CD4-positive, alpha-beta T cell (primary cell): ENCODE measurements at regions of chr11 and their contacts with region 1.

Region 1: GRCh38 chr11:65497141-65498041 is 1.5 kb upstream of the MALAT1 start:
- DNase-seq: peak; percentile 95 to 99 (median 98)
- ATAC-seq: peak; percentile 78
- H3K4me3 ChIP-seq: peak overlapping the region; percentile 73
- H3K4me3 Mint-ChIP-seq: no peak overlapping the region
- H3K27ac ChIP-seq: peak overlapping the region; percentile 96 to 99
- H3K27ac Mint-ChIP-seq: no peak overlapping the region
- H3K4me1 ChIP-seq: peaks cover 33% of the 10 kb centered on the region
- H3K4me1 Mint-ChIP-seq: peaks cover 28% of the 10 kb centered on the region
- H3K27me3 ChIP-seq: no peaks in the 10 kb centered on the region
- H3K27me3 Mint-ChIP-seq: no peaks in the 10 kb centered on the region
- CTCF ChIP-seq: no peak

Region 2: DNA sequence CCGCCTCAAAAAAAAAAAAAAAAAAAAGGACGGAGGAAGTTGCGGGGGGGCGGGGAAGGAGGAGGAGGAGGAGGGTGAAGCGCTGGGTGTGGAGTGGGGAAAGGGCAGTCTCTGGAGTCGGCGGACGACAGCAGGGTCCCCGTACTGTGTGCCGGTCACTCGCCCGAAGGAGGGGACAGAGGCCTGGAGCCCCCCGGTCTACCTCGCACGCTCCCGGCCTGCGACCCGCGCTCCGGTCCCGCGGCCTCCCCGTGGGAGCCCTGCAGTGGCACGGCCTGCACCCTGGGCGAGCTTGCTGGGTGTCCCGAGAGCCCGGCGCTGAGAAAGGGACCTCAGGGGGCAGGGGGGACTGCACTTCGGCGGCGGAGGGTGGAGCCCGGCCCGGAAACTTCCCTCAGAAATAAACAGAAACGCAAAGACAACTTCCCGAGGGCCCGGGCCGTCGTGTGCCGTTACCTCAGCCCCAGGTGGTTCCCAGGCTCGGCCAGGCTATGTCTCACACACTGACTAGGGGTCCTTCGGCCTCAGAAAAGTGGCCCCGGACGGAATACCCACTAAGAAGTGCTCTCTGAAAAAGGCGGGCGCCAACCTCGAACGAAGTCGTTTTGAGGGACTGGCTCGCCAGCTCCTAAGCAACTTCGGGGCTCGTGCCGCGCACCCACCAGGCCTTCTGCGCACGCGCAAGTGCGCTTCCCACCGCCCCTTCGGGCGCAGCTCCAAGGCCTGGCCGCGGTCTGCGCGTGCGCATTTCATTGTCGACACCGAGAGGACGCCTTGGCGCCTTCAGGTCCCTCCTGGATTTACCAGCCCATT is 525.8 kb before region 1 on chr11 and contains the start of gene MAJIN:
- CTCF ChIA-PET with region 1: no interaction called
- POLR2A ChIA-PET with region 1: interaction called, 10 read pairs
- intact Hi-C with region 1: no loop called
- DNase-seq: peak; percentile 76 to 95 (median 90)
- ATAC-seq: peak; percentile 82
- H3K4me3 ChIP-seq: peak within 1 kb of the TSS; percentile 58
- H3K4me3 Mint-ChIP-seq: peak within 1 kb of the TSS; percentile 81
- H3K27ac ChIP-seq: peak within 1 kb of the TSS in 1 of 2 donors; percentile 29
- H3K27ac Mint-ChIP-seq: peak within 1 kb of the TSS; percentile 83
- H3K4me1 ChIP-seq: peaks cover 23% of the 10 kb centered on the region
- H3K4me1 Mint-ChIP-seq: peaks cover 26% of the 10 kb centered on the region
- H3K27me3 ChIP-seq: no peaks in the 10 kb centered on the region
- H3K27me3 Mint-ChIP-seq: no peaks in the 10 kb centered on the region
- CTCF ChIP-seq: no peak
- total RNA-seq, gene MAJIN: 0.50 to 0.55 TPM

Region 3: DNA sequence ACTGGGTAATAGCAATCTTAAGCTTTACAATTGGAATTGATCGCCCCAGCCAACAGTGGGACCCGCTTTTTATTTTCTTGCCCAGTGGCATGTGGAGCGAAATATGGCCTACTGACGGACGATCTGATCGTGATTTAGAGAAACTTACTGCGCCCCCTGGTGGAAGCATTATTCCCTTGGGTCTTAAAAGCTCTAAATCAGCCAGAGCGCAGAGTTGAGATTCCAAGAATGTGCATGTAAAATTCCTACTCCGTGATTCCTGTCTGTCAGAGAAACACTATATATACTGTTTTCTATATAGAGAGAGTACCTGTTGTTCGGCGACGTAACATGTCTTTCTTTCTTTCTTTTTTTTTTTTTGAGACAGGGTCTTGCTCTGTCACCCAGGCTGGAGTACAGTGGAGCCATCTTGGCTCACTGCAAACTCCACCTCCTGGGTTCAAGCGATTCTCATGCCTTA is 167.4 kb before region 1 on chr11:
- CTCF ChIA-PET with region 1: no interaction called
- POLR2A ChIA-PET with region 1: interaction called, 42 read pairs
- intact Hi-C with region 1: no loop called
- DNase-seq: peak; percentile 56 to 93 (median 79)
- ATAC-seq: peak; percentile 28
- H3K4me3 ChIP-seq: no peak overlapping the region
- H3K4me3 Mint-ChIP-seq: peak overlapping the region; percentile 79
- H3K27ac ChIP-seq: no peak overlapping the region
- H3K27ac Mint-ChIP-seq: peak overlapping the region; percentile 15
- H3K4me1 ChIP-seq: peaks cover 12% of the 10 kb centered on the region
- H3K4me1 Mint-ChIP-seq: peaks cover 21% of the 10 kb centered on the region
- H3K27me3 ChIP-seq: no peaks in the 10 kb centered on the region
- H3K27me3 Mint-ChIP-seq: no peaks in the 10 kb centered on the region
- CTCF ChIP-seq: peak; percentile 97

Region 4: DNA sequence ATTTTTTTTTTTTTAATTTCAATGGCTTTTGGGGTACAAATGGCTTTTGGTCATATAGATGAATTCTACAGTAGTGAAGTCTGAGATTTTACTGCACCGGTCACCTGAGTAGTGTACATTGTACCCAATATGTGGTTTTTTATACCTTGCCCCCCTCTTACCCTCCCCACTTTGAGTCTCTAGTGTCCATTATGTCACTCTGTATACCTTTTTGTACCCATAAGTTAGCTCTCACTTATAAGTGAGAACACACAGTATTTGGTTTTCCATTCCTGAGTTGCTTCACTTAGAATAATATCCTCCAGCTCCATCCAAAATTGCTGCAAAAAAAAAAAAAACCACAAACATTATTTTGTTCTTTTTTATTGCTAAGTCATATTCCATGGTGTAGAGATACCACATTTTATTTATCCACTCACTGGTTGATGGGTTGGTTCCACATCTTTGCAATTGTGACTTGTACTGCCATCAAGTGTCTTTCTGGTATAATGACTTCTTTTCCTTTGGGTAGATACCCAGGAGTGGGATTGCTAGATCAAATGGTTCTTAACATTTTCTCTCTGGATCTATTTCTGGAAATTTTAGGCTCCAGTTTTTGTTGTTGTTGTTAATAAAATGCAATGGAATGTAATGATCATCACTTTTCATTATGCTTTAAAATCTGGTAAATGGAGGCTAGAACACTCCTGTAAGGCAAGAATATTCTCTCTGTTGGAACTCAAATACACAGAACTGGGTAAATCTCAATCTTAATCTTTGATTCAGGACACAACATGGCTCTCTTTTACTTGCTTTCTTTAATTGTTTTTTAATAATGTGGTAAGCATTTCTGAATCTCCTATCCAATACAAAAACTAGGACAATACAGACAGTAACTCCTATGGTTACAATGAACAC is 64.5 kb before region 1 on chr11:
- CTCF ChIA-PET with region 1: interaction called, 5 read pairs
- POLR2A ChIA-PET with region 1: interaction called, 3,042 read pairs
- intact Hi-C with region 1: no loop called
- DNase-seq: peak in 3 of 14 experiments; percentile 75 to 78 (median 77)
- ATAC-seq: peak; percentile 45
- H3K4me3 ChIP-seq: no peak overlapping the region
- H3K4me3 Mint-ChIP-seq: peak overlapping the region; percentile 74
- H3K27ac ChIP-seq: peak overlapping the region in 1 of 2 donors; percentile 37
- H3K27ac Mint-ChIP-seq: peak overlapping the region; percentile 89
- H3K4me1 ChIP-seq: peaks cover 48% of the 10 kb centered on the region
- H3K4me1 Mint-ChIP-seq: peaks cover 90% of the 10 kb centered on the region
- H3K27me3 ChIP-seq: no peaks in the 10 kb centered on the region
- H3K27me3 Mint-ChIP-seq: no peaks in the 10 kb centered on the region
- CTCF ChIP-seq: peak; percentile 74

Region 5: DNA sequence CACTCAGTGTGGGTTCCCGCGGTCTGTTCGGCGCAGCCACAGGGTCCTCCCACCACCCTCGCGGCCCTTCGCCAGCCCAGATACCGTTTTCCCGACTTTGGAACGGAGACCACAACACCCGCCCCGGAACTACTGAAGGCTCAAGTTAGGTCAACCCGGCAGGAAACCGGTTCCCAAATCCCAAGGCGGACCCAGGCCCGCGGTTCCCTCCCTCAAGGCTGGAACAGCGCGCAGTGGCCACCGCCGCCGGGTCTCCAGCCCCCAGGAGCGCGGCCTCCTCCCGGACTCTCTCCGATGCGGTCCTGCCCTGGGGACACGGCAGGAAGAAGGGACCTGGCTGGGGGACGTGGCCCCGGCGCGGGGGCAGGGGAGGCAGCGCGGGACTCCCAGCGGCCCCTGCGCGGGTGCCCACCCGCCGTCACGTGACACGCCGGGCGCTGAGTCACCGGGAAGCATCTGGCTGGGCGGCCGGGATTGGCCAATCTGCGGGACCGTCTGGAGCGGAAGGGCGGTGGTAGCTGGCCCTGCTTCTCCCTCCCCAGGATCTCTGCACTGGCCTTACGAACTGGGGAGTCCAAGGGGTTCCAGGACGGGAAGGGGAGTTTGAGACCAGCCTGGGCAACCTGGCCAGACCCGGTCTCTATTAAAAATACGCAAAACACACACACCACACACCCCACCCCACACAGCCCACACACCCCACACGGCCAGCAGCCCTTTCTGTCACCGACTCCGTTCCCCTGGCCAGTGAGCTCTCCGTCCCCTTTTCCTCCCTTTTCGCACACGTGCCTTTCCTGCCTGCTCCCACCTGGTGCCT is 20.0 kb before region 1 on chr11:
- CTCF ChIA-PET with region 1: interaction called, 24 read pairs
- POLR2A ChIA-PET with region 1: interaction called, 968 read pairs
- intact Hi-C with region 1: loop called (anchors 1 kb)
- DNase-seq: peak; percentile 69 to 94 (median 88)
- ATAC-seq: peak; percentile 84
- H3K4me3 ChIP-seq: peak overlapping the region; percentile 80
- H3K4me3 Mint-ChIP-seq: peak overlapping the region; percentile 100
- H3K27ac ChIP-seq: peak overlapping the region; percentile 94 to 99
- H3K27ac Mint-ChIP-seq: peak overlapping the region; percentile 99
- H3K4me1 ChIP-seq: peaks cover 34% of the 10 kb centered on the region
- H3K4me1 Mint-ChIP-seq: peaks cover 15% of the 10 kb centered on the region
- H3K27me3 ChIP-seq: no peaks in the 10 kb centered on the region
- H3K27me3 Mint-ChIP-seq: no peaks in the 10 kb centered on the region
- CTCF ChIP-seq: no peak

Region 6: DNA sequence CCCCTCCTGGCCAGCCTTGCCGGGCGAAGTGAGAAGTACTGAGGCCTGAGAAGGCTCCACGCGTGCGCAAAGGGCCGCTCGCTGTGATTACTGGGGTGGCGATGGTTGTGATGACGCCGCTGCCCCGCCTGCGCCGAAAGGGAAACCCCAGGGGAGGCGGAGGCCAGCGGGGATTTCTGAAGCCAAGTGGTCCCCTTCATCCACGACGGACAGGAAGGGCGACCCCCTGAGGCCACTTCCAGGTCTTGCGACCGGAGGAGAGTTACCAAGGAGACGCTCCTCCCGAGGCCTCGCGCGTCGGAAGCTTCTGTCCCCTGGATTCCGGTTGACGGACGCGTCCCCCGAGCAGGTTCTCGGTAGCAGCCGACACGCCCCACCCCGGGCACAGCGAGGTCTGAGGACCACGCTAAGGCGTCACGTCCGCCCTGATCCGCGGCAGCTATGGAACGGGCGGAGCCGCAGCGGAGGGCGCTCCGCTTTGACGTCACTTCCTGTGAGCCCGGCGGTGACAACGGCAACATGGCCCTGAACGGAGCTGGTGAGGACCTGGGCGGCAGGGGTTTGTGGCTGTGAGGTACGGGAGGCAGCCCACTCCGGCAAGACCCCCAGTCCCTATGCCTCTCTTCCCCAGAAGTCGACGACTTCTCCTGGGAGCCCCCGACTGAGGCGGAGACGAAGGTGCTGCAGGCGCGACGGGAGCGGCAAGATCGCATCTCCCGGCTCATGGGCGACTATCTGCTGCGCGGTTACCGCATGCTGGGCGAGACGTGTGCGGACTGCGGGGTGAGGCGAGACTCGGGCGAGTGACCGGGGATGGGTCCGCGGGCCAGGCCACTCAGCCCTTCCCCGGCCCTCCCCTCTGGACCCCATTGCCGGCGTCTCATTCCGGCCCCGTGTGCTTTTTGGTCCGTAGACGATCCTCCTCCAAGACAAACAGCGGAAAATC is 72.9 kb after region 1 on chr11 and contains the start of gene ZNRD2:
- CTCF ChIA-PET with region 1: no interaction called
- POLR2A ChIA-PET with region 1: interaction called, 92 read pairs
- intact Hi-C with region 1: no loop called
- DNase-seq: peak; percentile 96 to 100 (median 98)
- ATAC-seq: peak; percentile 71
- H3K4me3 ChIP-seq: peak within 1 kb of the TSS; percentile 89
- H3K4me3 Mint-ChIP-seq: peak within 1 kb of the TSS; percentile 100
- H3K27ac ChIP-seq: peak within 1 kb of the TSS; percentile 99 to 100
- H3K27ac Mint-ChIP-seq: peak within 1 kb of the TSS; percentile 98
- H3K4me1 ChIP-seq: peaks cover 87% of the 10 kb centered on the region
- H3K4me1 Mint-ChIP-seq: peaks cover 86% of the 10 kb centered on the region
- H3K27me3 ChIP-seq: no peaks in the 10 kb centered on the region
- H3K27me3 Mint-ChIP-seq: no peaks in the 10 kb centered on the region
- CTCF ChIP-seq: no peak
- total RNA-seq, gene ZNRD2: 38.7 to 39.9 TPM

Region 7: GRCh38 chr11:65888163-65888814 is 390.9 kb after region 1 on chr11 and contains the start of gene FIBP:
- CTCF ChIA-PET with region 1: no interaction called
- POLR2A ChIA-PET with region 1: interaction called, 14 read pairs
- intact Hi-C with region 1: no loop called
- DNase-seq: peak; percentile 92 to 98 (median 95)
- ATAC-seq: peak; percentile 60
- H3K4me3 ChIP-seq: peak within 1 kb of the TSS; percentile 93
- H3K4me3 Mint-ChIP-seq: peak within 1 kb of the TSS; percentile 87
- H3K27ac ChIP-seq: peak within 1 kb of the TSS; percentile 88 to 91
- H3K27ac Mint-ChIP-seq: peak within 1 kb of the TSS; percentile 95
- H3K4me1 ChIP-seq: peaks cover 68% of the 10 kb centered on the region
- H3K4me1 Mint-ChIP-seq: peaks cover 63% of the 10 kb centered on the region
- H3K27me3 ChIP-seq: no peaks in the 10 kb centered on the region
- H3K27me3 Mint-ChIP-seq: no peaks in the 10 kb centered on the region
- CTCF ChIP-seq: peak; percentile 95
- total RNA-seq, gene FIBP: 19.1 to 19.9 TPM